Breast epithelium (tissue), 4 donors: ENCODE measurements at regions of chr11 and their contacts with region 1.

Region 1: DNA sequence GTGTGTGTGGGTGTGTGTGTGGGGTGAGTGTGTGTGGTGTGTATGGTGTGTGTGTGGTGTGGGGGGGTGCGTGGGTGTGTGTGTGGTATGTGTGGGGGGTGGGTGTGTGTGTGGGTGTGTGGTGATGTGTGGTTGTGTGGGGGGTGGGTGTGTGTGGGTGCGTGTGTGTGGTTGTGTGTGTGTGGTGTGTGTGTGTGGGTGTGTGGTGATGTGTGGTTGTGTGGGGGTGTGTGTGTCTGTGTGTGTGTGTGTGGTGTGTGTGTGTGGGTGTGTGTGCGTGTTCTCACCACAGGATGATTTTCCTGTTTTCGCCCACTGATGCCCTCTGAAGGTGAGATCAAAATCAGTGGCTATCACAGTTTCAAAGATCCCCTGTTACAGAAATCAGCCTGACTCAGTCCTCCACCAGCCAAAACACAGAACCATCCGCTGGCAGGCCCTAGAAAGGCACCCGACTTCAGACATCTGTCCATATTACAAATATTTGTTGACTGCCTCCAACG is 24.7 kb downstream of the CPT1A start:
- DNase-seq: no peak
- H3K4me3 ChIP-seq: no peak overlapping the region
- H3K27ac ChIP-seq: no peak overlapping the region
- H3K4me1 ChIP-seq: peaks cover 0 to 8% of the 10 kb centered on the region in 2 donors
- H3K27me3 ChIP-seq: no peaks in the 10 kb centered on the region
- CTCF ChIP-seq: no peak
- POLR2A ChIP-seq: no peak

Region 2: DNA sequence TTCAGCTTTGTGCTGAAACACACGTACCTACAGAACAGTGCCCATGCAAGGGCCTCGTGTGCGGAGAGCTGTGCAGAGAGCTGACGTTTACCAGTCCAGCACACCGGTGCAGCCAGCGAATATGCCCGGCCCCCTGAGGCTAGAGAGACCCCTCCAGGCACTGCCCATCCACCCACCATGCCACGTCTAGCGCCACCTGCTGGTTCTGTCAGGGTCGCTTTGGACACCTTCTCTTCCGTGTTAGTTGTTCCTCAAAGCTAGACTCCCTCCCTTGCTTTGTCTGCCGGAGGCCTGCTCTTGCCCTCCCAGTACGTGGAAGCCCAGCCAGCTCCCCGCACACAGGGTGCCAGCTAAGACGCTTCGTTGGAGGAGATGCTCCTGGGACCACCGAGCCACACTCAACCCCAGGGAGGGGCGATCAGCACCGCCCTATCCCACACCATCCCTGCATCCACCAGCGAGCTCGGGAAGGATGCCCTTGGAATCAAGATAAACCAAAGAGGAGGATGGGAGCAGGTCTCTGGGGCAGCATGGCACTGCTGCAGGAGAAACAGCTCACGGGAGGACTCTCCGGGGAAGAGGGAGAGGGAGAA is 18.7 kb before region 1 on chr11:
- intact Hi-C with region 1: no loop called
- DNase-seq: no peak
- H3K4me3 ChIP-seq: no peak overlapping the region
- H3K27ac ChIP-seq: no peak overlapping the region
- H3K4me1 ChIP-seq: no peaks in the 10 kb centered on the region
- H3K27me3 ChIP-seq: no peaks in the 10 kb centered on the region
- CTCF ChIP-seq: peak in 2 of 3 donors; percentile 25 to 30
- POLR2A ChIP-seq: no peak

Region 3: DNA sequence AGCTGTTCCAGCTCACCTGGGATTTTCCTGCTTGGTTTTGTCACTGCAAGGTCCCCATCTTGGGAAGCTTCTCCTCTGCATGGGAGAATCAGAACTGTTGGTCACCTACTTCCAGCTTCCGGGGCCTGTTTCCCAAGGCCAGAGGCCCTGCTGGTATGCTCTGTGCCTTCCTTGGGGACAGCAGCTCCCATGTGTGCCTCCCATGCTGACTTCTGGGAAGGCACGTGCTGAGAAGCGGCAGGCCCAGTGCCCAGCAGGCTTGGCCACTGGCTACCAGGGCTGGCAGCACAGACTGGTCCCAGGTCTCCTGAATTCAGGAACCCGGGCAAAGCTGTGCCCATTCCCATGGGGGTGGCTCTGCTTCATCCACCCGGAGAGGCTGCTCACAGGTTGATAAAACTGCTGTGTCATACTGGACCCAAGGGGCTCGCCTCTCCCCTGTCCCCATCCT is 510.8 kb after region 1 on chr11:
- intact Hi-C with region 1: loop called (anchors 5 kb)
- DNase-seq: peak in 1 of 2 donors; percentile 47
- H3K4me3 ChIP-seq: no peak overlapping the region
- H3K27ac ChIP-seq: no peak overlapping the region
- H3K4me1 ChIP-seq: no peaks in the 10 kb centered on the region
- H3K27me3 ChIP-seq: no peaks in the 10 kb centered on the region
- CTCF ChIP-seq: no peak
- POLR2A ChIP-seq: no peak

Region 4: GRCh38 chr11:70415184-70415583 is 1598.2 kb after region 1 on chr11:
- intact Hi-C with region 1: no loop called
- DNase-seq: no peak
- H3K4me3 ChIP-seq: no peak overlapping the region
- H3K27ac ChIP-seq: peak overlapping the region in 1 of 2 donors; percentile 27
- H3K4me1 ChIP-seq: no peaks in the 10 kb centered on the region
- H3K27me3 ChIP-seq: no peaks in the 10 kb centered on the region
- CTCF ChIP-seq: peak in 1 of 3 donors; percentile 15
- POLR2A ChIP-seq: no peak